ENCODE measurements at regions of chr13 and their contacts with region 1.

Region 1: DNA sequence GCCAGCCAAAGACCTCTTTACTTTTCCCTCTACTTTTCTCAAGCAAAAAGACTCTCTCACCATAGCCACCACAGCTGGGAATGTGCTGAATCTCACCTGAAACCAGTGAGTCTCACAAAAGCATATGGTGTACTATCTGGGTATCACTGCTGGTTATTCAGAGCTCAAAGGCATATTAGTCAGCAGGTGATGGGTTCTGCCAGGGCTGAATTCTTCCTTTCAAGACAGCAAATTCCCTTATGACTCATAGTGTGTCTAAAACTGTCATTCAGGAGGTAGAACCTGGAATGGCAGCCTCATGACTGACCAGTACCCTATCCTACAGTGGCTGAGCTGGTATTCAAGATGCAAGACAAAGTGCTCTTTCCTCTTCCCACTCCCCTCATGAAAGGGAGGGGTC is 2859.1 kb downstream of the PCDH9 start:
- DNase-seq: no peak
- ATAC-seq: no peak

Region 2: GRCh38 chr13:64471916-64472315 is 100.9 kb after region 1 on chr13:
- intact Hi-C with region 1: no loop called
- DNase-seq: no peak
- ATAC-seq: no peak

Region 3: DNA sequence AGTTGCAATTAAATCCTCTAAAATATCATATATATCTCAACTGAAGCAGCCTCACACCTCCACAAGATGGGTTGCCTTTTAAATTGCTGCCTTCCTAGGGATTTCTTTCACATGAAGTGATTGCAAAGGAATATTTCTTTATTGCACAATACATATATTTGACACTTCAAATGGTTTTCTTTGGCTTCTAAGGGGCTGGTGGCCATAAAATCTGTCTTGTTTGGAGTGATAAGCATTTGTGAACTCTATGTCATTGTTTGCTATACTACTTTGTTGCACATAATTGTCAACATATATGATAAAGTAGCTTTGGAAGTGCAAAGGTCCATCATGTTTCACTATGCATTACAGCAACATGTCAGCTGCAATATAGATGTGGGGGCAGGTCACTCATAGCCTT is 478.2 kb after region 1 on chr13:
- intact Hi-C with region 1: loop called (anchors 5 kb)
- DNase-seq: no peak
- ATAC-seq: no peak

Measured in sciatic nerve (tissue), 2 donors.